ENCODE measurements at regions of chr5 and their contacts with region 1.

Region 1: DNA sequence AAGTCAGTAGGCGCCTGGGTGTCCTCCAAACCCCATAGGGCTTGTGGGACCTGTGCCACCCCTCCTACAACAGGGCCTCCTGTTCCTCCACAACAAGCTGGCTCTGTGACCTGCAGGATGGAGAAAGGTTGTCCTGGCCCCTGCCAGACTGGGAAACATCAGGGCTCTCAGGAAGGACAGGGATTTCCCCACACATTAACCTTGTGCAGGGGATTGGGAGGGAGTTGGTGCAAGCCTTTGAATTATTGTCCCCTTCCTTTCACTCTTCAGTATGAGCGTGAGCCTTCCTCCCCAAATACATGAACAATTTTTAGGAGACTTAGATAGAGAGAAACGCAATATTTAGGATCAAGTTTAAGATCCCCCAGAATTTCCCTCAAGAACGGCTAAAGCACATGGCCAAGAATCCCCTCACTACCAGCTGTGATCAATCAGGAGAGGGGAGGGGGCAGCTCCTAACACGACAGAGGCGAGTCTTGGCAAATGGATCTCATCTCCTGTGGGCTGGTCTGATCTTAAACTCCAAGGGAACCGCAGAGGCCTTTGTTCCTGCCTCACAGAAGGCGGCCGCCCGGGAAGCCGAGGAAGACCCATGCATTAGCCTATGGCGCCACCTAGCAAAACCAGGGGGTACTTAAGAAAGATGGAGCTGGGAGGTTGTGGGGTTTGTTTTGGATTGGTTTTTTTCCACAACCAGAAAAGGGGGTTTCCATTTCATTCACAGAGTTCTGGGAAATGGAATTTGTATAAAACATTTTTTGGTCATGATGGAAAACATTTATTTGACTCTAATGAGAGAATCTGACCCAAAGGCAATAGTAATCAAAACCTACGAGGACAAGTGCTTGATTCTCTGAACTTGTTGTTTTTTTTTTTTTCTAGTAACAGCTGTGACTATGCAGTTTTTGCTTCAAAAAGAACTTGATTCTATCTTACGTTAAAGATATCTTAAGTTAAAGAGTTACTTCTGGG is 36.1 kb upstream of the OSMR start:
- DNase-seq: peak; percentile 90
- ATAC-seq: peak; percentile 53
- H3K4me3 ChIP-seq: no peak overlapping the region
- H3K27ac ChIP-seq: no peak overlapping the region
- H3K4me1 ChIP-seq: peaks cover 41% of the 10 kb centered on the region
- H3K27me3 ChIP-seq: no peaks in the 10 kb centered on the region
- CTCF ChIP-seq: peak; percentile 97

Region 2: DNA sequence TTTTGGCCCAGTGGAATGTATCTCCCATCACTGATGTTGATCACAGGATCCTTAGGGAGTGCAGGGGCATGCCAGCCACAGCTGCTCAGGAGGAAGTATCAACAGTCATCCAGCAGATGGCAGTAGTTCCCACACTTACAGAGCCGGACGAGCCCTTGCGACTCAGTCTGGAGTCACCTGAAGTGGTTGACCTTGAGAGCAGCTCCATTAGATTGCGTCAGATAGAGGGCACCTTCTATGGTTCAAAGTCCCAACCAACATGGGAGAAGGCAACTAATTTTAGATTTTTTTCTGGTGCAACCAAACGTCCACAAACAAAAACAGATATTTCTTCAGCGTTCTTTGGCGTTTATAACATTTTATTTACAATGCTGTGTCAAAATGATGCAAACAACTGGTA is 426.8 kb before region 1 on chr5:
- CTCF ChIA-PET with region 1: interaction called, 4 read pairs
- POLR2A ChIA-PET with region 1: no interaction called
- intact Hi-C with region 1: loop called (anchors 5 kb)
- DNase-seq: peak; percentile 92
- ATAC-seq: peak; percentile 86
- H3K4me3 ChIP-seq: no peak overlapping the region
- H3K27ac ChIP-seq: no peak overlapping the region
- H3K4me1 ChIP-seq: peaks cover 22% of the 10 kb centered on the region
- H3K27me3 ChIP-seq: no peaks in the 10 kb centered on the region
- CTCF ChIP-seq: peak; percentile 97

Region 3: GRCh38 chr5:38447786-38448185 is 361.9 kb before region 1 on chr5:
- CTCF ChIA-PET with region 1: interaction called, 13 read pairs
- POLR2A ChIA-PET with region 1: no interaction called
- intact Hi-C with region 1: no loop called
- DNase-seq: no peak
- ATAC-seq: no peak
- H3K4me3 ChIP-seq: no peak overlapping the region
- H3K27ac ChIP-seq: no peak overlapping the region
- H3K4me1 ChIP-seq: no peaks in the 10 kb centered on the region
- H3K27me3 ChIP-seq: no peaks in the 10 kb centered on the region
- CTCF ChIP-seq: no peak

Region 4: GRCh38 chr5:38551030-38552017 is 258.4 kb before region 1 on chr5:
- CTCF ChIA-PET with region 1: interaction called, 4 read pairs
- POLR2A ChIA-PET with region 1: no interaction called
- intact Hi-C with region 1: loop called (anchors 1 kb)
- DNase-seq: peak; percentile 80
- ATAC-seq: peak; percentile 21; the same call in 1 of the 2 replicates
- H3K4me3 ChIP-seq: no peak overlapping the region
- H3K27ac ChIP-seq: no peak overlapping the region
- H3K4me1 ChIP-seq: peaks cover 43% of the 10 kb centered on the region
- H3K27me3 ChIP-seq: no peaks in the 10 kb centered on the region
- CTCF ChIP-seq: peak; percentile 90

Region 5: DNA sequence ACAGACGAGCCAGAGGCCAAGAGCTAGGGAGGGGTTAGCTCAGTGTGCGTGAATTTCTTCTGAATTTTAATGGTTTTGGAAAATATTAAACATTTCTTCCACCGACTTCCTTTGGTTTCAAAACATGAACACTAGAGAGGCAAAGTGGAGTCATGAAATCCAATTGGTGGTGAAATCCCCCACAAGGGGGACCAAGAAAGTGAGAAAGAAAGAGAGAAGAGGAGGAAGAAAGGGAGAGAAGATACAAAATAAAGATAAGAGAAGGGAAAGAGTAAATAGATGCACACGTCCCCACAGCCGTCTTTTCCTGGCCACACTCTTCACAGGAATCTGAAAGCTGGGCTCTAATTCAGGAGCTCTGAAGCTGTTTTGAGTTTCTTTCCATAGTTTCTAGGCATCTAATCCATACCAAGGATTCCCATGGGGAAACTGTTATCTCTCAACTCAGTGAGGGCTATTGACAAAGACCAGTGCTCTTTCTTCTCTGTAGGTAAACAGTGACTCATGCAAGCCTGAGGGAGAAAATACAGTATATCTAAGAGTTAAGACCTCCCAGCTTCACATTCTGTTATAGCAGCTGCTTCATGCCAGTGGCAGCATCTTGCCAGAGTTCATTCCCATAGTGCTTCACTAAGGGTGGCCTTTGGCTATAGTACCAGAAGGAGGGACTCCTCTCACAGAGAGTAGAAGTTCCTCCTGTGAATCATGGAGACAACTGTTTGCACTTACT is 137.4 kb before region 1 on chr5:
- CTCF ChIA-PET with region 1: interaction called, 6 read pairs
- POLR2A ChIA-PET with region 1: interaction called, 4 read pairs
- intact Hi-C with region 1: loop called (anchors 2 kb)
- DNase-seq: peak; percentile 89
- ATAC-seq: peak; percentile 85
- H3K4me3 ChIP-seq: no peak overlapping the region
- H3K27ac ChIP-seq: no peak overlapping the region
- H3K4me1 ChIP-seq: peaks cover 28% of the 10 kb centered on the region
- H3K27me3 ChIP-seq: no peaks in the 10 kb centered on the region
- CTCF ChIP-seq: no peak

Region 6: GRCh38 chr5:38783011-38783561 is 26.6 kb before region 1 on chr5:
- CTCF ChIA-PET with region 1: interaction called, 7 read pairs
- POLR2A ChIA-PET with region 1: interaction called, 6 read pairs
- intact Hi-C with region 1: loop called (anchors 1 kb)
- DNase-seq: peak; percentile 96
- ATAC-seq: peak; percentile 87
- H3K4me3 ChIP-seq: no peak overlapping the region
- H3K27ac ChIP-seq: peak overlapping the region; percentile 65
- H3K4me1 ChIP-seq: peaks cover 41% of the 10 kb centered on the region
- H3K27me3 ChIP-seq: no peaks in the 10 kb centered on the region
- CTCF ChIP-seq: no peak

Region 7: DNA sequence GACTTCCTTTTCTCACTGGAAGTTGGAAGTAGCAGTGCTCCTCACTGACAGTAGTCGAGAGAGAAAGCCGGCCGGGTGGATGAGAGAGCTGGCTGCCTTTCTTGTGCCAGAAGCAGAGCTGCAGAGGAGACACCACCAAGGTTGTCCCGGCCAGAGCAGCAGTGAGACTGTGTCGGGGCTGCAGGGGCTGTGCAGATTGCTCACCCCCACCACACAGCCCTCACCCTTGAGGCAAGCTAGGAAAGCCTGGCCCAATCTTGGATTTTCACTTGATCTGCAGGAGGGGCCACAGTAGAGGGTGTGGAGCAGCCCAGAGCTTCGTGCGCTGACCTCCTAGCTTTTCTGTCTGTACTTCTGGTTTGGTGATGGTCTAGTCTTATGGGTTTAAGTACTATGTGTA is 45.2 kb after region 1 on chr5:
- CTCF ChIA-PET with region 1: no interaction called
- POLR2A ChIA-PET with region 1: no interaction called
- intact Hi-C with region 1: no loop called
- DNase-seq: no peak
- ATAC-seq: no peak
- H3K4me3 ChIP-seq: no peak overlapping the region
- H3K27ac ChIP-seq: peak overlapping the region; percentile 60
- H3K4me1 ChIP-seq: peaks cover 31% of the 10 kb centered on the region
- H3K27me3 ChIP-seq: no peaks in the 10 kb centered on the region
- CTCF ChIP-seq: no peak

Region 8: DNA sequence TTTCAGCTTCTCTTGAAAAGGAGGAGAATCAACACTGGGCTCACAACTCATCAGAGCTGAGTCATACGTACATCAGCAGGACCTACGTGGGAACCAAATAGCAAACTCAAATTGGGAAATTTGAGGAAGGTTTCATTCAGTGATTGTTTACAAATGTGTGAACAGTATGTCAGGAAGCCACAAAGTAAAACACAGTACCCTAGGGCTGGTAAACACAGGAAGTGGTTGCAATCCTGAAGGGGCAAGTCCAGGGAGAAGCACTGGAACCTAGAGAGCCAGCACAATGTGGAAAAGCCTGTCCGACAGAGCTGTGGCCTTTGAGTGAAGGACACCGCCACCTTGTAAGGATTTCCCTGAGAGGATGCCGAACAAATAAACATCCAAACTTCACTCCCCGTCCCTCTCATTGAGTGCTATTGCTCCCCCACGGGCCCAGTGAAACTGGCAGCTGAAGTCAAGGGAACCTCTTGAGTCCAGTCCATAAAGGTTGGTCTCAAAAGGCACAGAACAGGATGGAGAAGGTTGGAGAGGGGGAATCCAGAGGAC is 291.2 kb after region 1 on chr5:
- CTCF ChIA-PET with region 1: no interaction called
- POLR2A ChIA-PET with region 1: no interaction called
- intact Hi-C with region 1: no loop called
- DNase-seq: peak; percentile 99
- ATAC-seq: peak; percentile 91
- H3K4me3 ChIP-seq: peak overlapping the region; percentile 53; the same call in 1 of the 2 replicates
- H3K27ac ChIP-seq: peak overlapping the region; percentile 97
- H3K4me1 ChIP-seq: peaks cover 52% of the 10 kb centered on the region
- H3K27me3 ChIP-seq: no peaks in the 10 kb centered on the region
- CTCF ChIP-seq: no peak

Measured in PC-3 (cell line).